ENCODE measurements at regions of chr1 and their contacts with region 1.

Region 1: DNA sequence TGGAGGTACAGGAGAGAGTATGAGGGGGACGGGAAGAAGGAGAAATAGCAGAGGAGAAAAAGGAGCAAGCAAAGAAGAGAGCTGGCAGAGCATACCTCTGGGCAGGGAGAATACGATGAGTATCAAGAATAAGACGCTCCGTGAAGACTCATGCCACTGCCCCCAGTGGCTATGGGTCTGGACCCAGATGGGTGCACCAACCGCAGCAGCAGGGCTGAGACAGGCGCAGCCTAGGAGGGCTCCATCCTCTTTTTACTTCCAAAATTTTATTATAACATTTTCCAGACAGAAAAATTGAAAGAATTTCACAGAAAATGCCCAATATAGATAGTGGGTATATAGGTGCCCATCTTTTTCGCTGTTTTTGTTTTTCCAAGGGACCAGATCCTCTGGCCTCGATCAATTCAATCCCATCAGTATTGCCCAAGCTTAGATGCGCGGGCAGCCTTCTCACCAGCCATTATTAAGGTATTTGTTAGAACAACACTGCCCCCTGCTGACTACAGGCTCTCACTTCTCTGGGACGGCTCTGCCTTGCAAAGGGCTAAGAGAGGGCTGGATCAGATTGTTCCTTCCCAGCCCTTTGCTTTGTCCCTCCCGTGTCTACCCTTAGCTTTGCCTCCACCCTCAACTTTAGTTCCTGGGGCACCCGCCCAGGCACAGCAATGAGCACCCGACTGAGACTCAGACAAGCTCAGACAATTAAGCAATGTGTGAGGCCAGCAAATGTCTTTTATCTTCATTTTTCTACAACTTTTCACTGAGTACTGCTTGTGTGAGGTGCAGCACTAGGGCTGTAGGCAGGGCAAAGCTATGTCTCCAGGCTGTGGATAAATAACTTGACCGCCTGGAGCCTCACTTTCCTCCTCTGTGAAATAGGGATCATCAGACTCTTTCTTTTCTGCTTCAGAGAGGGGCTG is 17.5 kb upstream of the CAMK1G start:
- DNase-seq: peak; percentile 77
- H3K4me3 ChIP-seq: no peak overlapping the region
- H3K27ac ChIP-seq: peak overlapping the region; percentile 18
- H3K4me1 ChIP-seq: peaks cover 38% of the 10 kb centered on the region
- H3K27me3 ChIP-seq: no peaks in the 10 kb centered on the region
- CTCF ChIP-seq: peak; percentile 78 to 87

Region 2: GRCh38 chr1:209248649-209249279 is 317.3 kb before region 1 on chr1:
- CTCF ChIA-PET with region 1: interaction called, 7 read pairs
- dilution Hi-C with region 1: no loop called
- in situ Hi-C with region 1: no loop called
- intact Hi-C with region 1: loop called (anchors 2 kb)
- DNase-seq: peak; percentile 56
- H3K4me3 ChIP-seq: no peak overlapping the region
- H3K27ac ChIP-seq: no peak overlapping the region
- H3K4me1 ChIP-seq: peaks cover 13% of the 10 kb centered on the region
- H3K27me3 ChIP-seq: no peaks in the 10 kb centered on the region
- CTCF ChIP-seq: peak; percentile 92 to 95

Region 3: DNA sequence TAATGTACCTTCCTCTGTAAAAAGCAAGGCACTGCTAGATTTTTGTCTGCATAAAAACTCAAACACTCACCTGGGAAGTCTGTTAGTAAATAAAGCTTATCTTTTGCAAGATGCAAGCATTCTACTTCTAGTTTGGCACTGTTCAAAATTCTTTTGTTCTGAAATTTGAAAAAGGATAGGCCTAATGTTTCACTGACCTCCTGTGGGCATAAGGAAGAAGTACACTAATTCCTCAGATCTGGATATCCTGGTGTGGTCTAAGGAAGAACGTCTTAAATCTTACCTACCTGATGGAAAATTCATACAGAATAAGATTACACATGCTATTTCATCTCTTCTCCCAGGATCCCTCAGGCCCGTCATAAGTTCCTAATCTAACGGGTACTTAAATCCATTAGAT is 76.0 kb before region 1 on chr1:
- CTCF ChIA-PET with region 1: interaction called, 3 read pairs
- dilution Hi-C with region 1: no loop called
- in situ Hi-C with region 1: no loop called
- intact Hi-C with region 1: loop called (anchors 1 kb)
- DNase-seq: peak; percentile 26
- H3K4me3 ChIP-seq: no peak overlapping the region
- H3K27ac ChIP-seq: no peak overlapping the region
- H3K4me1 ChIP-seq: peaks cover 26% of the 10 kb centered on the region
- H3K27me3 ChIP-seq: no peaks in the 10 kb centered on the region
- CTCF ChIP-seq: peak; percentile 74 to 77

Region 4: DNA sequence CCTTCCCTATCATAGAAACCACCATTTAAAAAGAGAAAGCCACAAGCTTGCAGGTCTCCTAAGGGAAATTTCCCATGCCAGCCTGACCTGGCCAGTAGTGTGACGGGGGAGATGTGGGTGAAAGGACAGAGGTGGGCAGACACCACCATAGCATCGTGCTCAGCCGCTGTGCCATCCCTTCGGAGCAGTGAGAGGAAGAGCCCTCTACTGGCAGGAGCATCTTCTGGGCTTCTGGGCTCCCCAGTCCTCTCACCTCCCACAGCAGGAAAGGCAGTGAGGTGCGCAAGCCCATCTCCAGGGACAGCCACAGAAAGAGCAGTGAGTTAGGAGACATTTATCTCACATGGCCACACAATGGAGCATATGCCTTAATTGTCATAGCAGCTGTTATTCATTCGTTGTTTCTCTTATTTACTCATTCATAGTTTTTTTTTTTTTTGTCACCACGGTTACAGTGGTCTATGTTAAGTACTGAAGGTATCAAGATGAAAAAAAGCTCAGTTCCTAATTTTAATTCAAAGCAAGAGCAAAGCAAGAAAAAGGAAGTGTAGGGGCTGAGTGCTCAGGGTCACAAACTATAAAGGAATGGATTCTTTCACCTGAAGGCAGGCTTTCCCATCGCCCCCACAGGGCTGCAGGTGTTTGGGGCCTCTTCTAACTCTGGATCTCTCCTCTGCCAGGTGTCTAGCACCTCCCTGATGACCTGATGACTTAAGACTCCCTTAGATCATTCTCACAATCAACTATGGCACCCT is 31.3 kb before region 1 on chr1:
- CTCF ChIA-PET with region 1: no interaction called
- dilution Hi-C with region 1: loop called (anchors 5 kb)
- in situ Hi-C with region 1: no loop called
- intact Hi-C with region 1: no loop called
- DNase-seq: no peak
- H3K4me3 ChIP-seq: no peak overlapping the region
- H3K27ac ChIP-seq: no peak overlapping the region
- H3K4me1 ChIP-seq: peaks cover 32% of the 10 kb centered on the region
- H3K27me3 ChIP-seq: no peaks in the 10 kb centered on the region
- CTCF ChIP-seq: no peak

Region 5: GRCh38 chr1:209733409-209734192 is 167.6 kb after region 1 on chr1:
- CTCF ChIA-PET with region 1: no interaction called
- dilution Hi-C with region 1: no loop called
- in situ Hi-C with region 1: loop called in 1 of 2 experiments (anchors 5 kb)
- intact Hi-C with region 1: no loop called
- DNase-seq: peak; percentile 75
- H3K4me3 ChIP-seq: no peak overlapping the region
- H3K27ac ChIP-seq: no peak overlapping the region
- H3K4me1 ChIP-seq: no peaks in the 10 kb centered on the region
- H3K27me3 ChIP-seq: no peaks in the 10 kb centered on the region
- CTCF ChIP-seq: no peak